ENCODE measurements at regions of chr20 and their contacts with region 1.

Region 1: DNA sequence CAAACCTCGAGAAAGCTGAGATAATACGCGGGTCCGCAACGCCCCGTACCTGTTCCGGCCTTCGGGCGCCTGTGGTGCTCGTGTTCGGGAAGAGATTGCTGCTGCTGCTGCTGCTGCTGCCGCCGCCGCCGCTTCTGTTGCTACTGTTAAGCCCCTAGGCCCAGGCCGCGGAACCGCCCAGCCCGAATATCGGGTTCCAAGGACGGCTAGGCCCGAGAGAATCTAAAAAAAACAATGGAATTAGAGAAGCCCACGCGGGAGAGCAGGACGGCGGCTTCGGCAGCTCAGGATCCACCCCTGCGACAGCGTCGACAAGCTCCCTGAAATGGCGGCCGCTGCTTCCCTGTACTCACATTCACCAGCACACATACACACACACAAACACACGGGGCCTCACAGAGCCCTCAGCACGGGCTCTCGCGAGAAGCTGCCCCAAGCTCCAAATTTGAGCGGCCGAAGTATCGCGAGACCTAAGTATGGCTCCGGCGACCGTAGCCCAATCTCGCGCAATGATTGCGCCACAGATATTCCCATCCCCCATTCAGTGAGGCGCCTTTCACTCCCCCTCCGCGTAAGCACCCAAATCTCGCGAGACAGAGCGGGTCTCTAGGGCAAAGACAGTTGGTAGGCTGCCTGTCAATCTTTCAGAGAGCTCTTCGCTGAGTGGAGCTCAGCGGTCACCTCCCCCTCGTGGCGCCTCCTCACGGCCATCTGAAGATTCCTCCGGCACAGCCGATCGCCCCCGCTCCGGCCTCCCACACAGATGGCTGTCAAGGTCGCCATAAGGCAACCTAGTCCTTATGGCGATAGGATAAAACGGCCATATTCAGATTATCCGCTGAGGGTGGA is at the start of gene RBM39:
- DNase-seq: peak; percentile 97 to 100 (median 99)

Region 2: DNA sequence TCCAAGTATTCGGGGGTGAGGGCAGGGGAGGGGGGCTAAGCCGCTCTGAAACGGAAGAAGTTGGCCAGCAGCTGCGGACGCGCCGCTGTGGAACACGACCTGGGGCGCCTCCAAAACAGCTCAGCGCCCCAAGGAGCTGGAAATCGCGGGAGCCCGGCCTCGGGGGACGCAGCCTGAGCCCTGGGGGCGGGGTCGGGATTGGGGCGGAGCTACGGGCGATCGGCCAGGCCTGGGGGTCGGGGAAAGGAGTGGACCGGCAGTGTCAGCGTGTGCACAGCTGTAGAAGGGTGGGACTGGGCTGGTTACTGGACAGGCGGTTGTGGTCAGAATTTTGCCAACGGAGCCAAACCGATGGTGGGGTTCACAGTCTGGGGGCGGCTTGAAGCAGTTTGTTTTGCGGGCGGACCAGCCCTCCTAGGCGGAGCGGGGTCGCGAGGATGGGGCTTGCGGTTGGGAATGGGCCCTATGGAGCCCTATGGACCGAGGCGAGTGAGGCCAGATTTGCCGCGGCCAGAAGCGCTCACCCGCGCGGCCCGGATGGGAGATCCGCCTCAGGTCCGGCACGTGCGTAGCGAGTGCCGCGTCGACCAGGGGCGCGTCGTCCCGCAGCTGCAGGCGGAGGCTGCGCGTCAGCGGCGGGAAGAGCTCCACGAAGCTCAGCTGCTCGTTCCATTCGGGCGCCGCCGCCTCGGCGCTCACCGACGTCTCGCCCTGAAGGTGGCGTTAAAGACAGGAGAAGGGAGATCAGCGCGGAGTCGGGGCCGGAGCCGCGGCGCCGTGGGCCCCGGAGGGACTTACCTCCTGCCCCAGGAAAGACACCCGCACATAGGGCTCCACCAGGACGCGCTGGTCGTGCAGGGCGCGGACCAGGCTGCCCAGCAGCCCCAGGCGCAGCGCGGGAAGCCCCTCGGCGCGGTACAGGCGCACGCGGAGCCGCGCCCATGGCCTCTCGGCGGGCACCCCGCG is 140.8 kb before region 1 on chr20:
- intact Hi-C with region 1: no loop called
- DNase-seq: peak; percentile 40 to 95 (median 70)

Region 3: DNA sequence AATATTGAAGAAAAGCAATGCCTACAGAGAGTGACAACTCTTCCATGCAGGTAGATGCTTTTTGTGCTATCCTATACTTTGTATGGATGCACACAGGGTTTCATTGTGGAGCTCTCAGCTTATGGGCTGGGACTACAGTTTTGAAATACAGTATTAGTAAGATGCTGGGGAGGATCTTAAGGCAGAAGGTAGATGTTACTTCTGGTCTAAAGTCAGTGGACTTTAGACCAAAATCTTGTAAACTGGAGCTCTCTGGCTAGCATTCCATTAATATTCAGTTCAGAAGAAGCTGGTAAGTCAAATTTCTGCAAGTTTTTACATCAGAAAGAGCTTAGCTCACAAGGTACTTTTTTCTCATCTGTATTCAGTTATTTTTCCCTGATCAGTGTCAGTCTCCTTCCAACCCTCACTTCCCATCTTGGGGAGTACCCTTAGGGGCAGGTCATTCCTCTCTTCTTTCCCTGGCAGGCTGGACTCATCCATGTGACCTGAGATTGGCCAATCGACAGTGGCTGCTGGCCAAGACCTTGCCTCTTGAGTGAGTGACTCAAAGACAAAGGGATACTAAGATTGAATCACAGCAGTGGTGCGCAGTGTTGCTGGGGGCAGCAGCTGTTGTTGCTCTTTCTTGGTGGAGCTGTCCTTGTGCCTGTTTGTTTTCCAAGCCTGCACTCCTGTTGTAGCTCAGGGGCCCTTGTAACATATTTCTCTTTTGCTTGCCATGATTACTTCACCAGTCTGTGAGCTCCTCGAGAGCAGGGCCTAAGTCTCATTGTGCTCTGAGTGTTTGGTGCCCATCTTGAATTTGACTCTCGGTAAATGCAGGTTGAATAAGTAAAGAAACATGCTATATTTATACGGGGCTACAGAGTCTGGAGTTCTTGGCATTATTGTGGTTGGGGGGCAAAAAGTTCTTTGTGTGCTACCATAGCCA is 26.9 kb after region 1 on chr20:
- intact Hi-C with region 1: loop called (anchors 2 kb)
- DNase-seq: peak; percentile 42 to 95 (median 76)

Measured in posterior cingulate gyrus (tissue), 11 donors.